Transverse colon (tissue), 4 donors: ENCODE measurements at regions of chr6 and their contacts with region 1.

Region 1: DNA sequence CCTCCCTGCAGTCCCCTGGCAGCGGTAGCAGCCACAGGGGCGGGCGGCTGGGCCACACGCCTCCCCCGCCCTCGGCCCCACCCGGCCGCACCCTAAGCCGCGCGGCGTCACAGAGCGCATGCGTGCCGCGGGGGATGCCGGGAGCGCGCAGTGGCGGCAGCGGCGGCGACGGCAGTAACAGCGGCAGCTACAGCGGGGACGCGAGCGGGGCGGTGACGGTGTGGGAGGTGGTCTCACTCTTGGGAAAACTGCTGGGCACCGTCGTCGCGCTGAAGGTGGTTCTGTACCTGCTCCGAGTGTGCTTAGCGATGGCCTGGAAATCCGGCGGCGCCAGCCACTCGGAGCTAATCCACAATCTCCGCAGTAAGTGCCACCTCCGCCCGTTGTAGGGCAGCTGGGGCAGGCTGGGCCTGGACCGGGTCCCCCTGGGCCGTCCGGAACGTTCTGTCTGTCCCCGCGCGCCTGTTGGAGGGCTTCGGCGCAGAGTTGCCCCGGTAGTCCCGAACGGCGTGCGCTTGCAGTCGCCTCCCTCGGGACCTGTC is at the start of gene PCMT1:
- DNase-seq: peak; percentile 92
- H3K4me3 ChIP-seq: peak within 1 kb of the TSS; percentile 68 to 94 (median 73)
- H3K27ac ChIP-seq: peak within 1 kb of the TSS; percentile 93 to 95 (median 94)
- H3K4me1 ChIP-seq: peaks cover 14 to 38% (median 30%) of the 10 kb centered on the region in 4 donors
- H3K27me3 ChIP-seq: no peaks in the 10 kb centered on the region
- CTCF ChIP-seq: no peak
- EP300 ChIP-seq: no peak
- POLR2A ChIP-seq: peak; percentile 90
- total RNA-seq, gene PCMT1: 25.8 to 97.3 (median 64.4) TPM

Region 2: GRCh38 chr6:151370509-151371078 is 1620.9 kb after region 1 on chr6:
- in situ Hi-C with region 1: no loop called
- intact Hi-C with region 1: loop called (anchors 5 kb)
- DNase-seq: no peak
- H3K4me3 ChIP-seq: no peak overlapping the region
- H3K27ac ChIP-seq: no peak overlapping the region
- H3K4me1 ChIP-seq: peaks cover 0 to 9% (median 1%) of the 10 kb centered on the region in 4 donors
- H3K27me3 ChIP-seq: no peaks in the 10 kb centered on the region
- CTCF ChIP-seq: no peak
- EP300 ChIP-seq: no peak
- POLR2A ChIP-seq: no peak